ENCODE measurements at regions of chr5 and their contacts with region 1.

Region 1: GRCh38 chr5:172832353-172833315 is 1.4 kb upstream of the ERGIC1 start:
- DNase-seq: no peak
- ATAC-seq: no peak
- H3K4me3 ChIP-seq: no peak overlapping the region; a peak in 1 of 4 replicates
- H3K27ac ChIP-seq: peak overlapping the region; percentile 90
- H3K4me1 ChIP-seq: peaks cover 58% of the 10 kb centered on the region
- H3K27me3 ChIP-seq: no peaks in the 10 kb centered on the region
- CTCF ChIP-seq: no peak

Region 2: GRCh38 chr5:172816901-172817564 is 15.6 kb before region 1 on chr5:
- CTCF ChIA-PET with region 1: no interaction called
- POLR2A ChIA-PET with region 1: interaction called, 11 read pairs
- in situ Hi-C with region 1: no loop called
- intact Hi-C with region 1: no loop called
- DNase-seq: no peak
- ATAC-seq: no peak
- H3K4me3 ChIP-seq: no peak overlapping the region
- H3K27ac ChIP-seq: no peak overlapping the region
- H3K4me1 ChIP-seq: peaks cover 14% of the 10 kb centered on the region
- H3K27me3 ChIP-seq: no peaks in the 10 kb centered on the region
- CTCF ChIP-seq: no peak

Measured in Panc1 (cell line).